OCI-LY7 (cell line): ENCODE measurements at regions of chr20 and their contacts with region 1.

Region 1: DNA sequence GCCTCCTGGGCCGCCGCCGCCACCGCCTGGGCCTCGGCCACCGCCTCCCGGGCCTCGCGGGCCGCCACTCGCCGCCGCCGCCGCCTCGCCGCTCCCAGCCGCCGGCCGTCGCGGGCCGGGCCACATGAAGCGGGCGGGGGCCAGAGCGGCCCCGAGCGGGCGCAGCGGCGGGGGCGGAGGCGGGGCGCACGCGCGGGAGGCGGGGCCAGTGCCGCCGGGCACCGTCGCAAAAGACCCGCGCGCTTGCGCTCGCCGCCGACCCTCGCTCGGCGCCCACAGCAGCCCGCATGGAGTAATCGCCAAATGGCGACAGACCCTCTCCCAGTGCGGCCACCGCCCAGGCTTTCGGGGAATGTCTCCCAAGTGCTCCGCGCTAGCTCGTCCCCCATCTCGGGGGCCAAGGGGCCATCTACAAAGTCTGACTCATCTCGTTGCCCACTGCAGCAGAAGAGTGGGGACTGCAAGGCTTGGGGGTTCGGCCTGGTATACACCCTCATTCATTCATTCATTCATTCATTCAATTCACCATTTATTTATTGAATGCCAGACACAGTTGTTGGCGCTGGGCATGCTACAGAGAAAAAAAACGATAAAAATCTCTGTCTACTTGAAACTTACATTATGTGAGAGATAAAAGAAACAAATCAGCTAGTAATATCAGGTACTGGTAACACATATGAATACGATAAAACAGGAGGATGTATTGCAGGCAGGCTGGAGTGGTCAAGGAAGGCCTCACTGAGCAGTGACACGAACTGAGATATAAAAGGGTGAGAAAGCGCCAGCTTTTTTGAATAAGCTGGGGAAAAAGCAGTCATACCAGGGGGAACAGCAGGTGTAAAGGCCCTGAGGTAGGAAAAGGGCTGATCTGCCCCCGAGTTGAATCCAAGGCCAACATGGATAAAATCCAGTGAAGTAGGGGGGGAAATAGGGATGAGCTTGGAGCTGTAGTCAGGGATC is at the start of gene B4GALT5:
- DNase-seq: peak; percentile 93
- H3K4me3 ChIP-seq: peak within 1 kb of the TSS; percentile 99
- H3K27ac ChIP-seq: peak within 1 kb of the TSS; percentile 63
- H3K4me1 ChIP-seq: peaks cover 36% of the 10 kb centered on the region
- CTCF ChIP-seq: no peak
- total RNA-seq, gene B4GALT5: 9.7 and 9.8 TPM in 2 replicates

Region 2: GRCh38 chr20:49668181-49668877 is 45.7 kb before region 1 on chr20:
- CTCF ChIA-PET with region 1: no interaction called
- POLR2A ChIA-PET with region 1: interaction called, 4 read pairs
- intact Hi-C with region 1: loop called (anchors 2 kb)
- DNase-seq: peak; percentile 74
- H3K4me3 ChIP-seq: peak overlapping the region; percentile 64
- H3K27ac ChIP-seq: peak overlapping the region; percentile 61
- H3K4me1 ChIP-seq: peaks cover 57% of the 10 kb centered on the region
- CTCF ChIP-seq: no peak

Region 3: DNA sequence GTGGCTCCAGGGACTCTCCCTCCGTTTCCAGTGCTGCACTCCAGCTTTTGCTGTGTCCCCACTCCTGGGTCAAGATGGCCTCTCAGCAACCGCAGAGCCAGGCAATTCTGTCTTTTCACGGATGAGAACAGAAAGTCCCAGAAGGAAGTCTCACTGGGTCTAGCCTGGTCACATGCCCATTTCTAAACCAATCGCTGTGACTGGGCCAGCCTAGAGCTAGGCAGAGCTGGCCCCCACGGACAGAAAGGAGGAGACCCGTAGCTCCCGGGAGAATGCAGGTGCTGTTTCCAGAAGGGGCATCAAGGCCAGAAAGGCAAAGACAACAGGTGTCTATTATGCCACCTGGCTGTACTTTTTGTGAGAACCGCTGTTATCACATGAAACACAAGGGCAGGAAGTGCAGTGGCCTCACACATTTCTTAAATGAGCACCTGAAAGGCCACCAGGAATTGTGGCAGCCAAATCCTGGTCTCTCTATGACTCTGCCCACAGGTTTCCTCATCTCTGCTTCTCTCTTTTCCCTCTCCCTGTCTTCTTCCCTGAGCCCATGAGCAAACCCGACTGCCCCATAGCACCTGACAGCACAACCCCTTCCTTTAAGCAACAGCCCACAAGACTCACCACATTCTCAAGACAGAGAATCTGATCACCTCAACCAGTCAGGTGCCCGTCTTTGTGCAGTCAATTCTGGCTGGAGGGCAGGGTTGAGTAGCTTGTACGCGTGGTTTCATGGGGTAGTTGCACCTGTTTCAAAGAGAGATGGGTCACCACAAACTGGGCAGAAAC is 36.8 kb after region 1 on chr20:
- CTCF ChIA-PET with region 1: no interaction called
- POLR2A ChIA-PET with region 1: interaction called, 3 read pairs
- intact Hi-C with region 1: loop called (anchors 2 kb)
- DNase-seq: peak; percentile 89
- H3K4me3 ChIP-seq: peak overlapping the region; percentile 51
- H3K27ac ChIP-seq: peak overlapping the region; percentile 91
- H3K4me1 ChIP-seq: peaks cover 52% of the 10 kb centered on the region
- CTCF ChIP-seq: no peak

Region 4: DNA sequence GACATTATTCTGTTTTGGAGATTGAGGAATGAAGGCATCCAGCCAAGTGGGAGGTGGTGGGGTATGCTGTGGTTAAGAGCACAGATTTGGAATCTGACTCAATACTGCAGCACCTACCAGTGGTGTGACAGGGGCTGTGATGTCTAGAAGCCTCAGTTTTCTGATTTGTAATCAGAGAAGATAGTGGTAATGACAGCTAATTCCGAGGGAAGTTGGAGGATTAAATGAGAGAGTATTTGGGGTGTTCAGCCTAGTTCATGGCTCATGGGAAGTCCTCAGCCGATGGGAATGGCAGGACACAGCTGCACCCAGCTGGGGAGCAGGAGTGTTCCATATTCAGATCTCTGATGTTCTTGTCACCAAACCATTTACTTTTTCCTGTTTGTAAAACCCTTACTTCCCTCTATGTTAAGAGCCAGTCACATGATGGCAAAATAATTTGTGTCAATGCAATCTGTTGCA is 107.9 kb after region 1 on chr20:
- CTCF ChIA-PET with region 1: no interaction called
- POLR2A ChIA-PET with region 1: interaction called, 3 read pairs
- intact Hi-C with region 1: loop called (anchors 5 kb)
- DNase-seq: peak; percentile 64
- H3K4me3 ChIP-seq: peak overlapping the region; percentile 33
- H3K27ac ChIP-seq: peak overlapping the region; percentile 91
- H3K4me1 ChIP-seq: peaks cover 43% of the 10 kb centered on the region
- CTCF ChIP-seq: peak; percentile 75

Region 5: DNA sequence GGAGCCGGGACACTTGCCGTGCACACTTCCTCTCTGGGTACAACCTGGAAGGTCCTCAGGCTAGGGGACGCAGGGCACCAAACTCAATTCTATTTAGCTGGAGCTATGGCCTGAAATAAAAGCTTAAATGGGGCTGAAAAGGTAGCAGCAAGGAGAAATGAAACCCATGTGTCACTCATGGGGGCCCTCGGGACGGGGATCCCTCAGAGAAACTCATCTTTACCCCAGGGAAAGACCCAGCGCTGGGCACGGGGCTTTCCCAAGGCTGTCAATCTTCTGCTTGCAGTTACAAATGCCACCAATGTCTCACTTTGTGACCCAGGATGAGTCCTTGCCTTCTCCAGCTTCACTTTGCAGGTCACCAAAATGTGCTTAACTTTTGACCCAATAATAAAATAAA is 285.3 kb after region 1 on chr20:
- CTCF ChIA-PET with region 1: interaction called, 14 read pairs
- POLR2A ChIA-PET with region 1: no interaction called
- intact Hi-C with region 1: no loop called
- DNase-seq: no peak
- H3K4me3 ChIP-seq: no peak overlapping the region
- H3K27ac ChIP-seq: no peak overlapping the region
- H3K4me1 ChIP-seq: peaks cover 33% of the 10 kb centered on the region
- CTCF ChIP-seq: no peak